ENCODE measurements at regions of chr17 and their contacts with region 1.

Region 1: DNA sequence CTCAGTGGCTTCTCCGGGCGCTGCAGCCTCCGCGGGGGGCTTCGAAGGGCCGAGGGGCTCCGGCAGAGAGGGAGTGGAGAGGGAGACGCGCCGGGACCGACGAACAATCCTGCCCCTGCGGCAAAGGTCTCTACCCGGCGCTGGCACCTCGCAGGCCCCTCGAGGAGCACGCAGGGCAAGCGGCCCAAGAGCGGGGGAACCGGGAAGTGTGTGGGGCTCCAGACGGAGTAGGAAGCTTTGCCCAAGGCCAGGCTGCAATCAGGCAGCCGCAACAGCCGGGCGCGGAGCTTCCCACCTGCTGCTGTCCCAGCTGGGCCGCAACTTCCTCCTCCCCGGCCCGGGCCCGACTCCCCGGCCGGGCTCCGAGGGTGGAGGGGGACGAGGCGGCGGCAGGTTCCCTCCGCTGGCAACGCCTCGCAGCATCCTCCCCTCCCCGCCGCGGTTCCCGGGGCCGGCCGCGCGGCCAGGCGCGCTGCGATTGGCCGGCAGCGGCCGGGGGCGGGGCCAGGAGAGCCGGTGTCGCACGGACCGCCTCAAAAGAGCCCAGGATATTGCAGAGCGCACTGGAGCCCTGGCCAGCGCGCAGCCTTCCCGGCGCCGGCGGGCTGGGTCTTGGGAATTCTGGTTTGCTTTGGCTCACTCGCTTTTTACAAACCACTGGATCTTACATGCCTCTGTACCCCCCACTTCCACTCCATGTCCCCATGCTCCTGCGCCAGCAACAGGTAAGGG is at the start of gene KCNJ2:
- DNase-seq: peak; percentile 68 to 85
- ATAC-seq: peak; percentile 92 to 97
- H3K4me3 ChIP-seq: peak within 1 kb of the TSS; percentile 54
- H3K27ac ChIP-seq: peak within 1 kb of the TSS; percentile 61 to 80
- H3K4me1 ChIP-seq: peaks cover 10% of the 10 kb centered on the region
- CTCF ChIP-seq: no peak
- EP300 ChIP-seq: no peak
- POLR2A ChIP-seq: peak; percentile 48
- RAD21 ChIP-seq: 0 out of 5 replicates have a peak, but pooled peaks of 1 of the 2 experiments have one; percentile 9
- polyA plus RNA-seq, gene KCNJ2: 0.14 and 0.40 TPM in 2 replicates

Region 2: GRCh38 chr17:69575346-69575761 is 593.8 kb before region 1 on chr17:
- CTCF ChIA-PET with region 1: interaction called, 30 read pairs
- POLR2A ChIA-PET with region 1: no interaction called
- DNase-seq: peak in 1 of 2 experiments; percentile 27
- ATAC-seq: no peak; a peak in 1 of 6 replicates
- H3K4me3 ChIP-seq: no peak overlapping the region
- H3K27ac ChIP-seq: peak overlapping the region; percentile 65 to 80
- H3K4me1 ChIP-seq: peaks cover 39% of the 10 kb centered on the region
- CTCF ChIP-seq: no peak
- EP300 ChIP-seq: no peak
- POLR2A ChIP-seq: no peak
- RAD21 ChIP-seq: no peak

Region 3: DNA sequence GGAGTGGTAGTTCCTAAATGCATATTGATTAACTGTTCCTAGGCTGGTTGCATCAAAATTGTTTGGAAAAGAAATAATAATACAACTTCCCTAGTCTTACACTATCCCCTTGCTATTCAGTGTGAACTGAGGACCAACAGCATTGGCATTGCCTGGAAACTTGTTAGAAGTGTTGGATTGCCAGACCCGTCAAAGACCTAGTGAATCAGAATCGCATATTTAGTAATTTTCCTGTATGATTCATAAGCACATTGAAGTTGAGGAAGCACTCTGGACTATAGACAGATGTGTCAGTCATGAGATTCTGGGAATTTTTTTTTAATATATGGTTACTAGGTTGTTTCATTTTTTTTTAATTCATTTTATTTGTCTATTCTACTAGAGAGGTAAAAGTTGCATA is 128.8 kb before region 1 on chr17:
- CTCF ChIA-PET with region 1: no interaction called
- POLR2A ChIA-PET with region 1: no interaction called
- DNase-seq: no peak
- ATAC-seq: peak in 1 of 2 experiments; percentile 68; a peak in 1 of 6 replicates
- H3K4me3 ChIP-seq: no peak overlapping the region
- H3K27ac ChIP-seq: no peak overlapping the region
- H3K4me1 ChIP-seq: no peaks in the 10 kb centered on the region
- CTCF ChIP-seq: no peak
- EP300 ChIP-seq: no peak
- POLR2A ChIP-seq: no peak
- RAD21 ChIP-seq: no peak

Region 4: DNA sequence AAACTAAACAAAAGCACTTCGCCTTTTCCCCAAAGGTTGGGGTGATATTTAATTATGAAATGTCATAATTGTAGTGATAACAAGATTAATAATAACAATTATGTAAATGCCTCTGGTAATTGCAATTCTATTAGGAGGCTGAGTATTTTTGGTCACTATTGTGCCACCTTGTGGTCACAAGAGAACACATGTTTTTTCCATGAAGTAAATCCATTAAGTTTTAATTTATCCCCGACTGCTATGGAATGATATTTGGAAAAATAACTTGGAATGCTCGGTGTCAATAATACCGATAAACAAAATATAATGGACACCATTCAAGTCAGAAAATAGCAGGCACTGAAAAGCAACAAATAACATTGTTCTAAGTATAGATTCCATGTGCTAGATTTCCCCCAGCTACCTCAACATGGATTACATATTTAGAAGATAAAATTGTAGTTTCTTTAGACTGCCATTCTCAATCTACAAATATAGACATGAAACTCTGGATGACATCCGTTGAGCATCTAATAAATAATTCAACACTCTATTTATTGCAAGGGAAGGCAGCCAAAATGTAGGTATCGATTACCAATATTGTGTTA is 24.8 kb before region 1 on chr17:
- CTCF ChIA-PET with region 1: interaction called, 11 read pairs
- POLR2A ChIA-PET with region 1: no interaction called
- DNase-seq: peak; percentile 15 to 50
- ATAC-seq: no peak
- H3K4me3 ChIP-seq: no peak overlapping the region
- H3K27ac ChIP-seq: no peak overlapping the region
- H3K4me1 ChIP-seq: no peaks in the 10 kb centered on the region
- CTCF ChIP-seq: peak; percentile 94
- EP300 ChIP-seq: no peak
- POLR2A ChIP-seq: no peak
- RAD21 ChIP-seq: peak; percentile 75 to 90

Region 5: GRCh38 chr17:70158180-70158579 is 11.0 kb before region 1 on chr17:
- CTCF ChIA-PET with region 1: interaction called, 12 read pairs
- POLR2A ChIA-PET with region 1: interaction called, 9 read pairs
- DNase-seq: no peak
- ATAC-seq: no peak
- H3K4me3 ChIP-seq: no peak overlapping the region
- H3K27ac ChIP-seq: no peak overlapping the region
- H3K4me1 ChIP-seq: peaks cover 8% of the 10 kb centered on the region; the same call in 1 of the 3 replicates
- CTCF ChIP-seq: no peak
- EP300 ChIP-seq: no peak
- POLR2A ChIP-seq: no peak
- RAD21 ChIP-seq: no peak

Region 6: DNA sequence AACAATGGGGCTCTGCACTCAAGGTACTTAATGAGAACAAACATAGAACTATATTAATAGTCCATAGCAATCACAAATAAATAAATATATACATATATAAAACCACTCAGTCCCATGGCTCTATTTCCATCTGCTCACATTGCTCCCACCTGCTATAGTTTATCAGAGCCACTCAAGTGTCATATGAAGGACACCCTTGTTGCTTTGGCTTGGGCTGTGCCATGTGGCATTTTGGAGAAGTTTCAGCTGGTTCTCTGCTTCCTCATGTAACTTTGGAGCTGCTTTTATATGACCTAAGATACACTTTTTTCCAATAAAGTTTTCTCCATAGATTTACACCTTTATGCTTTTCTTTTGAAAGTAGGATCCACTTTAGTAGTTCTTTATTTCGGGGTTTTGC is 126.6 kb after region 1 on chr17:
- CTCF ChIA-PET with region 1: no interaction called
- POLR2A ChIA-PET with region 1: no interaction called
- DNase-seq: no peak
- ATAC-seq: no peak
- H3K4me3 ChIP-seq: no peak overlapping the region
- H3K27ac ChIP-seq: no peak overlapping the region
- H3K4me1 ChIP-seq: no peaks in the 10 kb centered on the region
- CTCF ChIP-seq: no peak
- EP300 ChIP-seq: no peak
- POLR2A ChIP-seq: no peak
- RAD21 ChIP-seq: no peak

Measured in A549 (cell line).